ENCODE measurements at regions of chr13 and their contacts with region 1.

Region 1: DNA sequence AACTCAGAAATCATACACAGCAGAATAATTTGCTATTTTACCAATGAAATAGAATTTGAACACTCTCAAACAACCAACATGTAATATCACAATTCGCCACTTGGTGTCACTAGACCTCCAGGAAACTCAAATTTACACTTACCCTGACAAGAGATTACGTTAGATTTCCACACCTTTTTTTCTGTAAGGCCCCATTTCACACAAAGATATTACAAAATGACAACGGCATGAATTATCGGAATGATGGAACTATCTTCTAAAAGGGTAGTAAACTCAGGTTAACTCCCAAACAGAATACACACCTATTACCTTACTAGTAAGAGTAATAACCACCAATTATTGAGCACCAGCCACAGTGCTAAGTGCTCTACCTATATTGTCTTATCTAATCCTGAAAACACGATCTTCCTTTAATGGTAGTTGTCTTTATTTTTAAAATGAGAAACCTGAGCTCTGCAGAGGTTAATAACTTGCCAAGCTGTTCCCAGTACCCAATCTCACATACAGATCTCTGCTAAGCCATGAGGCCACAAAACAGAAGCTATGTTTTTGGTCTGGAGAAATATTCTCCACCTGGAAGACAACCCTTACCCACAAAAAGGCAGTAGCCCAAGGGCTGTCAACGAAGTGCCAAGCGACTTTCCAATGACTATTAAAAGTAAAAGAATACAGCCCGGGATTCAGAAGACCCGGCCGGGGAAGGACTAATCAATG is 152.4 kb downstream of the DCLK1 start:
- DNase-seq: peak; percentile 12 to 40
- ATAC-seq: peak in 1 of 2 experiments; percentile 60; a peak in 1 of 6 replicates
- H3K4me3 ChIP-seq: no peak overlapping the region
- H3K27ac ChIP-seq: no peak overlapping the region
- H3K4me1 ChIP-seq: no peaks in the 10 kb centered on the region
- CTCF ChIP-seq: peak; percentile 71
- EP300 ChIP-seq: no peak
- POLR2A ChIP-seq: no peak
- RAD21 ChIP-seq: peak; percentile 74 to 78

Region 2: GRCh38 chr13:36275190-36276002 is 296.6 kb after region 1 on chr13:
- CTCF ChIA-PET with region 1: interaction called, 88 read pairs
- POLR2A ChIA-PET with region 1: no interaction called
- DNase-seq: peak; percentile 3 to 46
- ATAC-seq: peak in 1 of 2 experiments; percentile 62; a peak in 3 of 6 replicates
- H3K4me3 ChIP-seq: no peak overlapping the region
- H3K27ac ChIP-seq: no peak overlapping the region
- H3K4me1 ChIP-seq: no peaks in the 10 kb centered on the region
- CTCF ChIP-seq: peak; percentile 50
- EP300 ChIP-seq: no peak
- POLR2A ChIP-seq: no peak
- RAD21 ChIP-seq: peak; percentile 49 to 58; a peak in 4 of 5 replicates

Measured in A549 (cell line).